Activated T-helper 1 cell treated with anti-CD3 and anti-CD28 coated beads, Interleukin-12 subunit alpha, Interleukin-12 subunit beta, Interleukin-2, Interleukin-4 antibody, amounts not matched to agents 30 ng/mL and 10 ng/mL and 1 ng/mL, durations not matched to agents 14 hours and 24 hours and 36 hours (primary cell): ENCODE measurements at regions of chr7 and their contacts with region 1.

Region 1: DNA sequence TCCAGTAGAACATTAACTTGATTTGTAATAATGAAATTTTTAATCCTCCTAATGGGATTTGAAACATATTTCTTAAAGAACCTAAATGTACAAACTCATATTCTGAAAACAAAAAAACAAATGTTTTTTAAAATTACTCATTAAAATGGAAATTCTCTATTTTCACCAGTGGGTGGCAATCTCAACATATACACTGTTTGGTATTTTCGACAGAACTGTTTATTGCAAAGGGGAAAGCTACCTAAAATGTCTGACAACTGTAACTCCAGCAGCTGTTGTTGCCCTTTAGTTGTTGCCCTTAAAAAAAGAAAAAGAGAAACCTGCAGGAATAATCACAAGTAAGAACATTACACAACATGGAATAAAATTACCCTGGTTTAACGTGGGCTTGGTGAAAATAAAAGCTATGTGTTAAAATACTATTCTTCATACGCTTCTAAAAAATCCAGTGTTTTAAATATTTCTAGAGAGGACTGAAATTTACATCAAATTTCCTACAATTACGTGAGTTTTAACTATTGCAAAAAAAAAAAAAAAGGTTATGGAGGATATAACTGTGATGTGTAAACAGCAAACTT is 54.5 kb downstream of the COL1A2 start:
- DNase-seq: no peak
- H3K4me3 Mint-ChIP-seq: no peak overlapping the region
- H3K27ac Mint-ChIP-seq: no peak overlapping the region
- H3K4me1 Mint-ChIP-seq: no peaks in the 10 kb centered on the region
- H3K27me3 Mint-ChIP-seq: peaks cover 6% of the 10 kb centered on the region

Region 2: DNA sequence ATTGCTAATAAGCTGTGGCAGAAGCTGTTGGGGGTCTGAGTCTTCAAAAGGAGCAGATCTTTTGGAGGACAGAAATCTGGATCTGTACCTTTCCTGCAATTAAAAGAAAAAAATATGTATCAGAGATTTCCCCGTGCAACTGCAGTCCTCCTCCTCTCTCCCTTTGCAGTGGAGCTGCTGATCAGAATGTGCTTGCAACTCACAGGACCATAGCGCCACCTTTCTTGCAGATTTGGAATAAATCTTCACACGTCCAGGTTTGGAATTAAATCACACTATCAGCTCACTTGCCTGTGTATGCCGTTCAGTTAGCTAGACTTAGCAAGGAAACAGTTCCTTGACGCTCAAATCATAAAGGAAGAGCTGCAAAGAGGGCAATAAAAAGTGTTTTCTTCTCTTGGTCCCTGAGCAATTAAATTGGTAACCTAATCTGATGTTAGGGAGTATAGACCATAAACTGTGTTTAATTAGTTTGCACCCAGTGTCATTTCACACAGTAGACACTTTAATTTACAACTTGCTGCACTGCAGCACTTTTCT is 797.7 kb after region 1 on chr7:
- intact Hi-C with region 1: loop called (anchors 2 kb)
- DNase-seq: no peak
- H3K4me3 Mint-ChIP-seq: no peak overlapping the region
- H3K27ac Mint-ChIP-seq: no peak overlapping the region
- H3K4me1 Mint-ChIP-seq: no peaks in the 10 kb centered on the region
- H3K27me3 Mint-ChIP-seq: no peaks in the 10 kb centered on the region